ENCODE measurements at regions of chr1 and their contacts with region 1.

Region 1: GRCh38 chr1:23422241-23423030 is 2.1 kb downstream of the TCEA3 start:
- DNase-seq: peak; percentile 60 to 86 (median 77)
- H3K4me3 ChIP-seq: peak overlapping the region in 1 of 4 donors; percentile 82
- H3K27ac ChIP-seq: peak overlapping the region in 4 of 5 donors; percentile 11 to 89 (median 86)
- H3K4me1 ChIP-seq: peaks cover 34 to 48% of the 10 kb centered on the region in 2 donors
- H3K27me3 ChIP-seq: no peaks in the 10 kb centered on the region
- CTCF ChIP-seq: no peak
- POLR2A ChIP-seq: peak in 1 of 2 donors; percentile 24

Region 2: GRCh38 chr1:23470282-23471071 is 48.0 kb after region 1 on chr1:
- intact Hi-C with region 1: loop called (anchors 5 kb)
- DNase-seq: no peak
- H3K4me3 ChIP-seq: no peak overlapping the region
- H3K27ac ChIP-seq: peak overlapping the region in 2 of 5 donors; percentile 40 to 71
- H3K4me1 ChIP-seq: peaks cover 0 to 29% of the 10 kb centered on the region in 2 donors
- H3K27me3 ChIP-seq: no peaks in the 10 kb centered on the region
- CTCF ChIP-seq: no peak
- POLR2A ChIP-seq: no peak

Measured in adrenal gland (tissue), 19 donors.